CD4-positive, alpha-beta T cell (primary cell): ENCODE measurements at regions of chr11 and their contacts with region 1.

Region 1: GRCh38 chr11:112074026-112074811 is at the start of gene NKAPD1:
- DNase-seq: peak; percentile 65 to 92 (median 74)
- ATAC-seq: peak; percentile 87
- H3K4me3 ChIP-seq: peak within 1 kb of the TSS; percentile 80
- H3K4me3 Mint-ChIP-seq: peak within 1 kb of the TSS; percentile 97
- H3K27ac ChIP-seq: peak within 1 kb of the TSS; percentile 70 to 73
- H3K27ac Mint-ChIP-seq: peak within 1 kb of the TSS; percentile 78
- H3K4me1 ChIP-seq: peaks cover 13% of the 10 kb centered on the region
- H3K4me1 Mint-ChIP-seq: peaks cover 36% of the 10 kb centered on the region
- H3K27me3 ChIP-seq: no peaks in the 10 kb centered on the region
- H3K27me3 Mint-ChIP-seq: peaks cover 27% of the 10 kb centered on the region
- CTCF ChIP-seq: no peak
- total RNA-seq, gene NKAPD1: 14.8 to 16.0 TPM

Region 2: DNA sequence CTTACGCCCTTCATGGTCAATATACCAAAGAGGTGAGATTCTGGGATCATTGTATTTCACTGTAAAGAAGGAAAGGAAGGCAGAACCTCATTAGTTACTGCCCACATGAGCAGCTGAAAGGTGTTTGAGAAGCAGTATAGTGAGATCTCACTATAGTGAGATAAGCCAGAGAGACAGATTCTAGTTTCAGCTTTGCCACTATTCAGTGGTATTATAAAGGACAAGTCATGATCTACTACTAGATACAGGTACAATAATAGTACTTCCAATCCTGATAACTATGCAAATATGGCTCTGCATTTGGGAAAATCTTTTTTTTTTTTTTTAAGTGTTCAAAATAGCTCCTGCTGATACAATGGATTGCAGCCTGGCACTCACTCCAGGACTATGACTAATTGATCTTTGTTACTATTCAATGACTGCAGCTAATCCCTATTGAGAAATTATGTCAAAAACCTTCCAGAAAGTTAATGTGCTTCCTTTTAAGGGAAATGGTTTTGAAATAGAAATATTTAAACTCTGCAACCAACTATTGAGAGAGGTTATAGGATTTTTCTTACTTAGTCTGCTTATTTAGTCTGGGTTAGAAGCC is 57.4 kb before region 1 on chr11:
- CTCF ChIA-PET with region 1: no interaction called
- POLR2A ChIA-PET with region 1: no interaction called
- intact Hi-C with region 1: no loop called
- DNase-seq: no peak
- ATAC-seq: no peak
- H3K4me3 ChIP-seq: no peak overlapping the region
- H3K4me3 Mint-ChIP-seq: no peak overlapping the region
- H3K27ac ChIP-seq: no peak overlapping the region
- H3K27ac Mint-ChIP-seq: no peak overlapping the region
- H3K4me1 ChIP-seq: no peaks in the 10 kb centered on the region
- H3K4me1 Mint-ChIP-seq: no peaks in the 10 kb centered on the region
- H3K27me3 ChIP-seq: no peaks in the 10 kb centered on the region
- H3K27me3 Mint-ChIP-seq: peaks cover 6% of the 10 kb centered on the region
- CTCF ChIP-seq: no peak

Region 3: DNA sequence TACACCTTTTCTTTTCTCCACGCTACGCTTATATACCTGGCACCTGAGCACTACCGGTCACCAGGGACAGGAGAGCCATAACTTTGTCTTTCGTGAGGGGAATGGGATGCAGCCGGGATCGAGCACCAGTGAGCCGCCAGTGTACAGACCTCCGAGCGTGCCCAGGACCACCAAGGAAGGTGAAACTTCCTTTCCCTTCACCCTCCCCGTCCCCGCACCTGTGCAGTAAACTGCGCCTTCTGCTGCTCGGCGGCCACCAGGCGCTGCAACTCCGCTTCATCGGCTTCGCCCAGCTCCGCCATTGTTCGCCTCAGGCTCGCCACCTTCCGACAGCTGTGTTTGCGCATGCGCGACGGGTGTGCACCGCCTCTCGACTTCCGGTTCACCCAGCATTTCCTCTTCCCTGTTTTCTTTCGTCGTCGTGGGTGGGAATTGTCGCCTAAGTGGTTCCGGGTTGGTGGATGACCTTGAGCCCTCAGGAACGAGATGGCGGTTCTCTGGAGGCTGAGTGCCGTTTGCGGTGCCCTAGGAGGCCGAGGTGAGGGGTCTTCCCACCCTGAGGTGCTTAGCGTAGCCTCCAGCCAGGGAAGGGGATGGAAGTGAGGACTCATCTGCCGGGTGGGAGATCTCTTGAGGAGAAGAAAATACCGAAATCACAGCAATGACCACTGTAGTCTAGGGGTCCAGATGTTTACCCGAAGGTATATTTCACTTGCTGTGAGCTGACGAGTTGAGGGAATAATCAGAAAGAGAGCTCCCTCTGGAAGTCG is 12.4 kb after region 1 on chr11 and contains the starts of genes SDHD and TIMM8B:
- CTCF ChIA-PET with region 1: interaction called, 4 read pairs
- POLR2A ChIA-PET with region 1: interaction called, 36 read pairs
- intact Hi-C with region 1: loop called (anchors 1 kb)
- DNase-seq: peak; percentile 91 to 99 (median 94)
- ATAC-seq: peak; percentile 93
- H3K4me3 ChIP-seq: peak within 1 kb of the TSS; percentile 88
- H3K4me3 Mint-ChIP-seq: peak within 1 kb of the TSS; percentile 99
- H3K27ac ChIP-seq: peak within 1 kb of the TSS; percentile 35 to 75
- H3K27ac Mint-ChIP-seq: peak within 1 kb of the TSS; percentile 94
- H3K4me1 ChIP-seq: peaks cover 32% of the 10 kb centered on the region
- H3K4me1 Mint-ChIP-seq: peaks cover 54% of the 10 kb centered on the region
- H3K27me3 ChIP-seq: no peaks in the 10 kb centered on the region
- H3K27me3 Mint-ChIP-seq: no peaks in the 10 kb centered on the region
- CTCF ChIP-seq: peak; percentile 29
- total RNA-seq, gene SDHD: 24.8 to 29.4 TPM
- total RNA-seq, gene TIMM8B: 9.1 to 10.5 TPM